MCF 10A (cell line): ENCODE measurements at regions of chr1 and their contacts with region 1.

Region 1: GRCh38 chr1:117758444-117759316 is 152.8 kb downstream of the TENT5C start:
- DNase-seq: peak; percentile 83
- H3K4me3 Mint-ChIP-seq: peak overlapping the region; percentile 76
- H3K27ac Mint-ChIP-seq: no peak overlapping the region
- H3K4me1 Mint-ChIP-seq: peaks cover 11% of the 10 kb centered on the region
- H3K27me3 Mint-ChIP-seq: no peaks in the 10 kb centered on the region
- CTCF ChIP-seq: peak; percentile 84

Region 2: DNA sequence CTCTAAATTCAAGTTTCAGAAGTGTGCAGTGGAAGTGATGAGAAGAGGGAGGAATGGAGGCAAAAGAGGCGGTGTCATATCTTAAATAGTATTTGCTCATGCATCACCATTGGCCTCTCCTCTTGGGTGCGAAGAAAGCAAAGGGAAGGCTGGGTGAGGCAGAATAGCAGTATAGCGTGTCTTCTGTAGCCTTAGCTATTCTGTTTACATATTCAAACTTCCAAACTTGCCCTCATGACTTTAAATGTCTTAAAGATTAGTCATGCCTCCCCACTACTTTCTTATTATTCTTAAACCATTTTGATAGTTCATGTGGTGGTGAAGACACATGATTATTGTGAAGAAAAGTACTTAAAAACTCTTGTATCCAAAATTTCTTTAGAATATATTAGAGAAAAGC is 257.4 kb before region 1 on chr1:
- CTCF ChIA-PET with region 1: interaction called, 271 read pairs
- POLR2A ChIA-PET with region 1: no interaction called
- intact Hi-C with region 1: no loop called
- DNase-seq: no peak
- H3K4me3 Mint-ChIP-seq: no peak overlapping the region
- H3K27ac Mint-ChIP-seq: no peak overlapping the region
- H3K4me1 Mint-ChIP-seq: no peaks in the 10 kb centered on the region
- H3K27me3 Mint-ChIP-seq: no peaks in the 10 kb centered on the region
- CTCF ChIP-seq: no peak

Region 3: DNA sequence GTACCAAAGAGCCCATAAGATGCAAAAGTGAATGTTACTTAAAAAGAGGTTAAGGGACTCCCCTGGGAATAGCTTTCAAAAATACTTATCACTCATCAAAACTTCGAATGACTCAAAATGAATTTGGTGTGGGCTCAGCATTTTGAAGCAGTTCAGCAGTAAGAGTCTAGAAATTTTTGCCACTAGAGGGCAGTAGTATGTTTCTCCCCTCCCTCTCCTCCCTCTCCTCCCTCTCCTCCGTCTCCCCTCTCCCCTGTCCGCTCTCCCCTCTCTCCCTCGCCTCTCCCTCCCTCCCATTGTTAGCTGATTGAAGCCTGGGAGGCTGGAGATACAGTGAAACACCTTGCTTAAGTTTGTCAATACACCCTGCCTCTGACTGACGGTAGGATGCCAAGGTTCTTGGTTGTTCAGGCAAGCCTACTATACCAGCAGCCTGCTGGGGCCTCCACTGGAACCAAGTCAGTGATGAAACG is 223.6 kb before region 1 on chr1:
- CTCF ChIA-PET with region 1: interaction called, 395 read pairs
- POLR2A ChIA-PET with region 1: interaction called, 12 read pairs
- intact Hi-C with region 1: loop called (anchors 1 kb)
- DNase-seq: peak; percentile 62
- H3K4me3 Mint-ChIP-seq: no peak overlapping the region
- H3K27ac Mint-ChIP-seq: no peak overlapping the region
- H3K4me1 Mint-ChIP-seq: no peaks in the 10 kb centered on the region
- H3K27me3 Mint-ChIP-seq: no peaks in the 10 kb centered on the region
- CTCF ChIP-seq: peak; percentile 53

Region 4: DNA sequence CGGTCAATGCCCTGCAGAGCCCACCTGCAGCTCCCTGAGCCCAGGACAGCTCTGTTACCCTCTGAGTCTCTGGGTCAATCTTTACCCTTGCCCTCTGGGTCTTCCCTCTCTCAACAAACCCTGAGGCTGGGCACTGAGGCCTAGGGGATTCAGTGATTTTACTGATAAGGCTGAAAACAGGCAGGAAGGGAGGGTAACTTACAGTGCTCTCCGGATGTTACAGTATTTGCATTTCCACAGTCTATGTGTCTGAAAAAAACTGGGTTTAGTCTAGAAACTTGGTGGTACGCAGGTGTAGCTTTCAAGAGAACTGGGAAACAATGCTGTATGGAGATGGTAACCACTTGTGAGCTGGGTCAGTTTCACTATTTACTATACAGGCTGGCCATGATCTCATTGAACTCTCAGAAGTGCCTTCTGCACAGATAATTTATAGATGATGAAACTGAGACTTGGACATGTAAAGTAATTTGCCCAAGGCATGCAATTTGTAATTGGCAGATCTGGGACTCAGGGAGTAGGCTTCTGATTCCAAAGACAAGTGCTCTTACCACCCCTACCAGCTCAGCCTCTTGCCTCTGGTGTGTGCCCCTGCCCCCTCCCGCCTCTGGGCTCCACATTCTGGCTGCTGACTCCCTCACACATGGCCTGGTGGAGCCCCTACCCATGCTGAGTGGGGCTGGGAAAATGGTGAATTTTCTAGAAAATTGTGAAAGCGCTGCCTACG is 104.0 kb before region 1 on chr1:
- CTCF ChIA-PET with region 1: interaction called, 16 read pairs
- POLR2A ChIA-PET with region 1: interaction called, 4 read pairs
- intact Hi-C with region 1: no loop called
- DNase-seq: peak; percentile 55
- H3K4me3 Mint-ChIP-seq: no peak overlapping the region
- H3K27ac Mint-ChIP-seq: peak overlapping the region; percentile 74
- H3K4me1 Mint-ChIP-seq: peaks cover 23% of the 10 kb centered on the region
- H3K27me3 Mint-ChIP-seq: no peaks in the 10 kb centered on the region
- CTCF ChIP-seq: no peak

Region 5: DNA sequence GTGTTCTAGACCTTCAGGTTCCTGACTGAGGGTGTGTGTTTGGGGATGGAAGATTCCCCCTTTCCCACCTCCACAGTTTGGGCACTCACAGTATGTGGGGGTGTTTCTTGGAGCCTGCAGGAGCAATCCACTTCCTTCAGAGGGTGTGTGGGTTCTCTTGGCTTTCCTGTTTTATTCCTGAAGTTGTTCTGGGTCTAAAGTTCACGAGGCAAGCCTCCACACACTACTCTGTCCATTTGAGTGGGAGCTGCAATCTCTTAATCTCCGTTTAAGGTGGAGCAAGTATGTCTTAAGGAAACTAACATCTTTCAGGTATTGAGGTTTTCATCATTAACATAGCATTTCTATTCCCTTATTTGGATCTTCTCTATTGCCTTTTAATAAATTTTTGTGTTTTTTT is 11.1 kb before region 1 on chr1:
- CTCF ChIA-PET with region 1: interaction called, 19 read pairs
- POLR2A ChIA-PET with region 1: no interaction called
- intact Hi-C with region 1: no loop called
- DNase-seq: no peak
- H3K4me3 Mint-ChIP-seq: no peak overlapping the region
- H3K27ac Mint-ChIP-seq: no peak overlapping the region
- H3K4me1 Mint-ChIP-seq: no peaks in the 10 kb centered on the region
- H3K27me3 Mint-ChIP-seq: peaks cover 12% of the 10 kb centered on the region
- CTCF ChIP-seq: no peak

Region 6: DNA sequence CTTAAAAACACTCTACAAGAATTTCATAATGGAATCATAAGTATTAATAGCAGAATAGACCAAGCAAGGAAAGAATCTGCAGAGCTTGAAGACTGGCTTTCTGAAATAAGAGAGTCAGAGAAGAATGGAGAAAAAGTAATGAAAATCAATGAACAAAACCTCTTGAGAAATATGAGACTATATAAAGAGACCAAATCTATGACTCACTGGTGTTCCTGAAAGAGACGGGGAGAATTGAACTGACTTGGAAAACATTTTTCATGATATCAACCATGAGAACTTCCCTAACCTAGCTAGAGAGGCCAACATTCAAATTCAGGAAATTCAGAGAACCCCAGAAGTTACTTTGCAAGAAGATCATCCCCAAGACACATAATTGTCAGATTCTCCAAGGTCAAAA is 85.1 kb after region 1 on chr1:
- CTCF ChIA-PET with region 1: interaction called, 10 read pairs
- POLR2A ChIA-PET with region 1: no interaction called
- intact Hi-C with region 1: no loop called
- DNase-seq: no peak
- H3K4me3 Mint-ChIP-seq: no peak overlapping the region
- H3K27ac Mint-ChIP-seq: no peak overlapping the region
- H3K4me1 Mint-ChIP-seq: peaks cover 14% of the 10 kb centered on the region
- H3K27me3 Mint-ChIP-seq: no peaks in the 10 kb centered on the region
- CTCF ChIP-seq: no peak

Region 7: GRCh38 chr1:118101515-118101844 is 342.8 kb after region 1 on chr1:
- CTCF ChIA-PET with region 1: no interaction called
- POLR2A ChIA-PET with region 1: no interaction called
- intact Hi-C with region 1: no loop called
- DNase-seq: peak; percentile 45
- H3K4me3 Mint-ChIP-seq: no peak overlapping the region
- H3K27ac Mint-ChIP-seq: no peak overlapping the region
- H3K4me1 Mint-ChIP-seq: peaks cover 15% of the 10 kb centered on the region
- H3K27me3 Mint-ChIP-seq: no peaks in the 10 kb centered on the region
- CTCF ChIP-seq: no peak